K562 (cell line): ENCODE measurements at regions of chr11 and their contacts with region 1.

Region 1: DNA sequence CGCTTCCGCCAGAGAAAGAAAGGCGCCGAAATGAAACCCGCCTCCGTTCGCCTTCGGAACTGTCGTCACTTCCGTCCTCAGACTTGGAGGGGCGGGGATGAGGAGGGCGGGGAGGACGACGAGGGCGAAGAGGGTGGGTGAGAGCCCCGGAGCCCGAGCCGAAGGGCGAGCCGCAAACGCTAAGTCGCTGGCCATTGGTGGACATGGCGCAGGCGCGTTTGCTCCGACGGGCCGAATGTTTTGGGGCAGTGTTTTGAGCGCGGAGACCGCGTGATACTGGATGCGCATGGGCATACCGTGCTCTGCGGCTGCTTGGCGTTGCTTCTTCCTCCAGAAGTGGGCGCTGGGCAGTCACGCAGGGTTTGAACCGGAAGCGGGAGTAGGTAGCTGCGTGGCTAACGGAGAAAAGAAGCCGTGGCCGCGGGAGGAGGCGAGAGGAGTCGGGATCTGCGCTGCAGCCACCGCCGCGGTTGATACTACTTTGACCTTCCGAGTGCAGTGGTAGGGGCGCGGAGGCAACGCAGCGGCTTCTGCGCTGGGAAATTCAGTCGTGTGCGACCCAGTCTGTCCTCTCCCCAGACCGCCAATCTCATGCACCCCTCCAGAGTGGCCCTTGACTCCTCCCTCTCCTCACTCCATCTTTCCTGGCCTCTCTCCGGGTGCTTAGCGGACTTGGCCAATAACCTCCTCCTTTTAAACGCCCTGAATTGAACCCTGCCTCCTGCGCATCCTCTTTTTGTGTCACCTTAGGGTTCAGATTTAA is at the start of gene ATM:
- DNase-seq: peak; percentile 94 to 99 (median 94)
- ATAC-seq: peak; percentile 89
- H3K4me3 ChIP-seq: peak within 1 kb of the TSS; percentile 80
- H3K27ac ChIP-seq: peak within 1 kb of the TSS; percentile 97
- H3K4me1 ChIP-seq: peaks cover 15 to 46% of the 10 kb centered on the region in 2 experiments
- H3K27me3 ChIP-seq: no peaks in the 10 kb centered on the region
- CTCF ChIP-seq: peak; percentile 88 to 98 (median 94)
- EP300 ChIP-seq: no peak; the same call in none of the 2 replicates
- POLR2A ChIP-seq: peak; percentile 72
- RAD21 ChIP-seq: peak; percentile 72 to 79
- polyA plus RNA-seq, gene ATM: 8.3 to 9.0 TPM

Region 2: DNA sequence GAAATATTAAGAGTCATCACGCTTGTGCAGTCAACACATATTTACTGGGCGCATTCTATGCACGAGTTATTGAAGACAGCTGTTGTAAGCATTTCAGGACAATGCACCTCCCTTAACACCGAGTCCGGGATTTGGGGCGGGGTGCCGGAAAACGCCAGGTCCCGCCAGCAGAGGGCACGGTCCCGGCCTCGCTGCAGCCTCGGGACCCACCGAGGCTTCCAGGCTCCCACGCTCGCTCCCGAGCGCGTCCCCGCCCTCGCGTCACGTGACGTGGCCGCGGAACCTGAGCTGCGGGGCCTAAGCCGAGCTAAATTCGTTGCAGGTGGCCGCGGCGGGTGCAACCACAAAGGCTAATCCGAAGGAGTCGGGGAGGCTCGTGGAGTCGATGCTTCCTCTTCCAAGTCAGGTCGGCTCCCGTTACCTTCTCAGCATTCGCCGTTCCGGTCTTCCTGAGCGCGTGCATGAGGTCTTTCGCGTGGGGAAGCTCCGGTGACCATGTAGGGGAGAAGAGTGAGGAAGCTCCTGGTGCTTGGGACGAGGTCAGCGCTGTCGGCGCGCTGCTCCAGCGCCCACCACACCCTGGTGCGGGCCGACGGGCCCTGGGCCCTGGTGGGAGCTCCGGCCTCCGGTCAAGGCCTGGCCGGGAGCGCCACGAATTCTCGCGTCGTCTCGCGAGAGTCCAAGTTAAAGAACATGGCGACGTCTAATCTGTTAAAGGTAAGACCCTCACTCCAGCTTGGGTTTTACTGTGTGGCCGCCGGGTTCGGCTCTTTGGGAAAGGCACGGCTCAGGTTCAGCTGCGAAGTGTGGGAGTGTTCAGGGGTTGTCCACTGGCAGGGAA is 214.0 kb before region 1 on chr11 and contains the start of gene CUL5:
- CTCF ChIA-PET with region 1: no interaction called
- POLR2A ChIA-PET with region 1: interaction called, 6 read pairs
- in situ Hi-C with region 1: no loop called
- intact Hi-C with region 1: loop called (anchors 5 kb)
- DNase-seq: peak; percentile 89 to 95 (median 91)
- ATAC-seq: peak; percentile 83
- H3K4me3 ChIP-seq: peak within 1 kb of the TSS; percentile 90
- H3K27ac ChIP-seq: peak within 1 kb of the TSS; percentile 99
- H3K4me1 ChIP-seq: peaks cover 12 to 20% of the 10 kb centered on the region in 2 experiments; a peak in 3 of 5 replicates
- H3K27me3 ChIP-seq: no peaks in the 10 kb centered on the region
- CTCF ChIP-seq: peak; percentile 87 to 88 (median 88)
- EP300 ChIP-seq: 0 out of 2 replicates have a peak, but pooled peaks have one; percentile 11
- POLR2A ChIP-seq: peak; percentile 94
- RAD21 ChIP-seq: peak; percentile 62 to 80
- polyA plus RNA-seq, gene CUL5: 14.3 to 16.3 TPM

Region 3: DNA sequence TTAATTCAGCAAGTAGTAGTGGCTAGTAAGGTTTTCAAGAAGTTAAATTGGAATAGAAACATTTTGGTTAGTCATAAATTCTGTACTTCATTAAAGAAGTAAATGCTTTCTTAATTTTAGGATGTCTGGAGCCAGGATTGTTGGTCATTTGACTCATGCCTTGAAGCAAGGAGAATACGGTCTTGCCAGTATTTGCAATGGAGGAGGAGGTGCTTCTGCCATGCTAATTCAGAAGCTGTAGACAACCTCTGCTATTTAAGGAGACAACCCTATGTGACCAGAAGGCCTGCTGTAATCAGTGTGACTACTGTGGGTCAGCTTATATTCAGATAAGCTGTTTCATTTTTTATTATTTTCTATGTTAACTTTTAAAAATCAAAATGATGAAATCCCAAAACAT is 75.7 kb before region 1 on chr11:
- CTCF ChIA-PET with region 1: no interaction called
- POLR2A ChIA-PET with region 1: interaction called, 3 read pairs
- in situ Hi-C with region 1: no loop called
- intact Hi-C with region 1: loop called (anchors 1 kb)
- DNase-seq: no peak
- ATAC-seq: no peak
- H3K4me3 ChIP-seq: no peak overlapping the region
- H3K27ac ChIP-seq: no peak overlapping the region
- H3K4me1 ChIP-seq: peaks cover 0 to 4% of the 10 kb centered on the region in 2 experiments; a peak in 2 of 5 replicates
- H3K27me3 ChIP-seq: no peaks in the 10 kb centered on the region
- CTCF ChIP-seq: no peak
- EP300 ChIP-seq: no peak
- POLR2A ChIP-seq: no peak
- RAD21 ChIP-seq: no peak

Region 4: DNA sequence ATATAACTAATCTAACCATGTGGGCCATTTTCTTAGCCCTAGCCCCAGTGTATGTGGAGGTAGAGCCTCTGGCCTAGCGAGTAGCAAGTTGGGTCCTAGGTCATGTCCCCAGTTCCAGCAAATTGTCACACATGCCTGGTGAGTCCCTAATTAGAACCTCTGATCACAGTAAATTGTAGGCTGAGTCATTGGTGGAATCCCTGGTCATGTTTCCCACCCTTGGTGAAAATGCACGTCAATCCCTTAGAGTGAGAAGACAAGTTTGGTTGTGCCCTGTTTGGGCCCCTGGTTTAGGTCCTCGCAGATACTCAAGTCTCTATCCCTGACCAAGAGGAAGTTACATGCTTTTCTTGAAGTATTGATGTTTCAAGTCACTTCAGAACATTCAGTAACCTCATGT is 46.7 kb after region 1 on chr11:
- CTCF ChIA-PET with region 1: no interaction called
- POLR2A ChIA-PET with region 1: no interaction called
- in situ Hi-C with region 1: no loop called
- intact Hi-C with region 1: no loop called
- DNase-seq: no peak
- ATAC-seq: no peak
- H3K4me3 ChIP-seq: no peak overlapping the region
- H3K27ac ChIP-seq: no peak overlapping the region
- H3K4me1 ChIP-seq: no peaks in the 10 kb centered on the region
- H3K27me3 ChIP-seq: no peaks in the 10 kb centered on the region
- CTCF ChIP-seq: no peak
- EP300 ChIP-seq: no peak
- POLR2A ChIP-seq: no peak
- RAD21 ChIP-seq: no peak

Region 5: GRCh38 chr11:108351458-108351857 is 128.6 kb after region 1 on chr11:
- CTCF ChIA-PET with region 1: no interaction called
- POLR2A ChIA-PET with region 1: no interaction called
- in situ Hi-C with region 1: no loop called
- intact Hi-C with region 1: loop called (anchors 5 kb)
- DNase-seq: peak in 1 of 4 experiments; percentile 6
- ATAC-seq: peak; percentile 59
- H3K4me3 ChIP-seq: no peak overlapping the region
- H3K27ac ChIP-seq: no peak overlapping the region
- H3K4me1 ChIP-seq: no peaks in the 10 kb centered on the region
- H3K27me3 ChIP-seq: no peaks in the 10 kb centered on the region
- CTCF ChIP-seq: no peak
- EP300 ChIP-seq: no peak
- POLR2A ChIP-seq: no peak
- RAD21 ChIP-seq: peak in 1 of 2 experiments; percentile 37; a peak in 2 of 4 replicates

Region 6: DNA sequence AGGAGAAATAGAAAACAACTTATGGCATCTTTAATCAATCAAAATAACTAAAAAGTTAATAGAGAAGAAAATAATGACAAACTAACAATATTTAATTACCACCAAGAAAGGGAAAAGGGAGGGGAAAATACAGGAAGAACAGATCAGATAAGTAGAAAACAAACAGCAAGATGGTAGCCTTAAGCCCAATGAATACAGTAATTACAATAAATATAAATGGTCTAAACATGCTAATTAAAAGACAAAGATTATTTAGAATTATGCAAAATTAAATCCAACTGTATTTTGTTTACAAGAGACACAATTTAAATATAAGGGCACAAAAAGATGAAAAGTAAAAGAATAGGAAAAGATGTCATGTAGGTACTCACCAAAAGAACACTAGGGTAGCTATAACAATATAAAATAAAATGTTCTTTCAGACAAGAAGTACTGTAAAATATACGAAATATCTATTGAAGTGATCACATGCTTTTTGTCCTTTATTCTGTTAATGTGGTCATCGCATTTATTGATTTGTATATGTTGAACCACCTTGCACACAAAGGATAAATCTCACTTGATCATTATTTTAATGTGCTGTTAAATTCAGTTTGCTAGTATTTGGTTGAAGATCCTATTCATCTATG is 230.5 kb after region 1 on chr11:
- CTCF ChIA-PET with region 1: no interaction called
- POLR2A ChIA-PET with region 1: no interaction called
- in situ Hi-C with region 1: no loop called
- intact Hi-C with region 1: no loop called
- DNase-seq: no peak
- ATAC-seq: no peak
- H3K4me3 ChIP-seq: no peak overlapping the region
- H3K27ac ChIP-seq: no peak overlapping the region
- H3K4me1 ChIP-seq: peaks cover 0 to 3% of the 10 kb centered on the region in 2 experiments; a peak in 2 of 5 replicates
- H3K27me3 ChIP-seq: no peaks in the 10 kb centered on the region
- CTCF ChIP-seq: no peak
- EP300 ChIP-seq: no peak
- POLR2A ChIP-seq: no peak
- RAD21 ChIP-seq: no peak

Region 7: DNA sequence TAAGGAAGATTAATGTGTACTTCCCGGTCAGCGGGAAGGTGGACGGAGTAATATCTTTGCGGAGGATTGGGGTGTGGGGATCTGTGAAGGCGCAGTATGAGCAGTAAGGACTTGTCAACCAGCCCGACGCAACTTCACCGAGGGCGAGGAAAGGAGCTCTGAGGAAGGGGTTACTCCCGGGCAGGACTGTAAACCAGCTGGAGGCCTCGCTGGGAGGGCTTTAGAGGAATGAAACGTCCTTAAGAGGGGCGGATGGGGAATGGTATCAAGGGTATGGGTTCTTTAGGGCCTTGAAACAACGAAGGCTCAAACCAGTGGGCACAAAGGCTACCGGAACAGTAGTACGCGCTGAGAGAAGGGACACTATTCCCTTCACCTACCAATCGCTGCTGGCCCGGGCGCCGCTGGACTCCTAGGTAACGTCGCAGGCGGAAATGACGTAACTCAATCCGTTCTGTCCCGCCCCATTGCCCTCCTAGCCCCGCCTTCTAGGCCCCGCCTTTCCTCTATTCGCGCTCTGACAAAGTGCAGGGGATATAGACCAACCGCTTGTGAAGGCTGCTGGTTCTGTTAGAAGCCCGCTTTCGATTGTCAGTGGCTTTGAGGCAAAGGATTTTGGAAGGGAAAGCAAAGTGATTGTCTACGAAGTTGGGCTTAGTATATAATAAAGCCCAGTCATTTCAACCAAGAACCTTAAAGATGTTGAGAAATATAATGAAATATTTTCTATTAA is 244.4 kb after region 1 on chr11 and contains the start of gene C11orf65:
- CTCF ChIA-PET with region 1: no interaction called
- POLR2A ChIA-PET with region 1: interaction called, 5 read pairs
- in situ Hi-C with region 1: no loop called
- intact Hi-C with region 1: loop called (anchors 2 kb)
- DNase-seq: peak; percentile 94 to 97 (median 95)
- ATAC-seq: peak; percentile 98
- H3K4me3 ChIP-seq: peak within 1 kb of the TSS; percentile 54
- H3K27ac ChIP-seq: peak within 1 kb of the TSS; percentile 91
- H3K4me1 ChIP-seq: peaks cover 6 to 8% of the 10 kb centered on the region in 2 experiments; a peak in 4 of 5 replicates
- H3K27me3 ChIP-seq: no peaks in the 10 kb centered on the region
- CTCF ChIP-seq: no peak
- EP300 ChIP-seq: no peak; the same call in 1 of the 2 replicates
- POLR2A ChIP-seq: peak; percentile 99
- RAD21 ChIP-seq: peak in 1 of 2 experiments; percentile 15; a peak in 1 of 4 replicates
- polyA plus RNA-seq, gene C11orf65: 1.0 to 1.7 TPM

Region 8: DNA sequence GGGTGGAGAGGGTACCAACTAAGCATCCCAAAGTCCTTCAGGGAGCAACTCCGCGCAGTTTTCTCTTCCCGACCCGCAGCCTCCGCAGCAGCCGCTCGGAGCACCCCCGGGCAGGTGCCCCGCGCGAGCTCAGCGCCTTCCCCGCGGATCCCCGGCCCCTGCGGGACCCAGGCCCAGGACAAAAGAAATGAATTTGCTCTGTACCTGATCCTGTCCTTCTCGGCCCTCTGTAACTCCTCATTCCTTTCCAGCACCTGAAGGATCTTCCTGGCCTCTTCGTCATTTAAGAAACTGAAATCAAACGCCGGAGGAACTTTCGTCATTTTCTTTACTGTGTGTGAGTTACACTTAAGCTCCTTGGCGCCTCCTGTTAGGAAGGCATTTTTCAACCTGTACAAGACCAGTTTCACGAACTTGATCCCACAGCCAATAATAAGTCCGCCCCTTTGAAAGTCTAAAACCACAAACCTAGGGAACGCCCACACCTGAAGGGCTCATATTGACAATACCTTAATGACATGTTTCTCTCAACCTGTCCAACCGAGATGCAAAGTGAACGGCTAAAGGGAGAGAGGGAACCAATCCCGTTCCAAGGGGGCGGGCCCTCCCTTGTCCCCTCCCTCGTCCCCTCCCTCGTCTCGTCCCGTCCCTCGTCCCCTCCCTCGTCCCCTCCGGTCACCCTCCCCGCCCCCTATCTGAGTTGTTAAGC is 370.5 kb after region 1 on chr11 and contains the start of gene EXPH5:
- CTCF ChIA-PET with region 1: no interaction called
- POLR2A ChIA-PET with region 1: no interaction called
- in situ Hi-C with region 1: no loop called
- intact Hi-C with region 1: loop called (anchors 2 kb)
- DNase-seq: peak; percentile 96 to 98 (median 98)
- ATAC-seq: peak; percentile 95
- H3K4me3 ChIP-seq: peak within 1 kb of the TSS; percentile 77
- H3K27ac ChIP-seq: peak within 1 kb of the TSS; percentile 91
- H3K4me1 ChIP-seq: peaks cover 11 to 30% of the 10 kb centered on the region in 2 experiments; a peak in 4 of 5 replicates
- H3K27me3 ChIP-seq: no peaks in the 10 kb centered on the region
- CTCF ChIP-seq: peak in 2 of 3 experiments; percentile 17 to 22; a peak in 1 of 6 replicates
- EP300 ChIP-seq: no peak
- POLR2A ChIP-seq: peak; percentile 81
- RAD21 ChIP-seq: 0 out of 4 replicates have a peak, but pooled peaks of 1 of the 2 experiments have one; percentile 4
- polyA plus RNA-seq, gene EXPH5: 1.3 to 4.8 TPM